Naive thymus-derived CD4-positive, alpha-beta T cell (primary cell): ENCODE measurements at regions of chr22 and their contacts with region 1.

Region 1: GRCh38 chr22:31080848-31081649 is at the start of gene SMTN:
- DNase-seq: peak; percentile 75 to 90 (median 84)
- ATAC-seq: peak; percentile 83
- H3K4me3 ChIP-seq: peak within 1 kb of the TSS; percentile 84
- H3K4me3 Mint-ChIP-seq: peak within 1 kb of the TSS; percentile 83 to 93 (median 88)
- H3K27ac ChIP-seq: peak within 1 kb of the TSS; percentile 43
- H3K27ac Mint-ChIP-seq: peak within 1 kb of the TSS in 8 of 9 donors; percentile 35 to 78 (median 68)
- H3K4me1 ChIP-seq: peaks cover 13 to 39% of the 10 kb centered on the region in 2 donors
- H3K4me1 Mint-ChIP-seq: peaks cover 26 to 43% (median 38%) of the 10 kb centered on the region in 7 donors
- H3K27me3 ChIP-seq: no peaks in the 10 kb centered on the region
- H3K27me3 Mint-ChIP-seq: no peaks in the 10 kb centered on the region
- total RNA-seq, gene SMTN: 3.1 to 14.9 (median 6.2) TPM

Region 2: DNA sequence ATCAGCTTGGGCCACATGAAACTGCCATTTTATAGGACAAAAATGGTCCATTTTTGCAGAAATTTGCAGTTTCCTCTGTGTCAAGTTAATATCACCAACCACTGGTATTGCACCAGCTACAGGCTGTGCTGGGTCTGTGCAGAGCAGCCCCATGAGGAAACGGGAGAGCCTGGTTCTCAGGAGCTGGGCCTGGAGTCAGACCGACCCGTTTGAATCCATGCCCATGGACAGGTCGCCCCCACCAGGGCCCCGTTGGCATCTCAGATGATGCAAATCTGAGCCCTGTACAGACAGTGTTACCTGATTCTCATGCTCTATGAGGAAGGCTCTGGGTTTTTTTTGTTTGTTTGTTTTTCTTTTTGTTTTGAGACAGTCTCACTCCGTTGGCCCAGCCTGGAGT is 524.7 kb before region 1 on chr22:
- CTCF ChIA-PET with region 1: no interaction called
- POLR2A ChIA-PET with region 1: no interaction called
- intact Hi-C with region 1: no loop called
- DNase-seq: no peak
- ATAC-seq: no peak
- H3K4me3 ChIP-seq: no peak overlapping the region
- H3K4me3 Mint-ChIP-seq: no peak overlapping the region
- H3K27ac ChIP-seq: no peak overlapping the region
- H3K27ac Mint-ChIP-seq: no peak overlapping the region
- H3K4me1 ChIP-seq: no peaks in the 10 kb centered on the region
- H3K4me1 Mint-ChIP-seq: peaks cover 0 to 5% (median 0%) of the 10 kb centered on the region in 7 donors
- H3K27me3 ChIP-seq: no peaks in the 10 kb centered on the region
- H3K27me3 Mint-ChIP-seq: peaks cover 0 to 3% (median 0%) of the 10 kb centered on the region in 5 donors

Region 3: GRCh38 chr22:30634471-30635233 is 446.4 kb before region 1 on chr22:
- CTCF ChIA-PET with region 1: interaction called, 7 read pairs
- POLR2A ChIA-PET with region 1: interaction called, 3 read pairs
- intact Hi-C with region 1: loop called (anchors 1 kb)
- DNase-seq: peak; percentile 79 to 91 (median 88)
- ATAC-seq: peak; percentile 76
- H3K4me3 ChIP-seq: peak overlapping the region; percentile 77
- H3K4me3 Mint-ChIP-seq: peak overlapping the region; percentile 77 to 92 (median 83)
- H3K27ac ChIP-seq: peak overlapping the region; percentile 70
- H3K27ac Mint-ChIP-seq: peak overlapping the region; percentile 75 to 93 (median 85)
- H3K4me1 ChIP-seq: peaks cover 18 to 27% of the 10 kb centered on the region in 2 donors
- H3K4me1 Mint-ChIP-seq: peaks cover 13 to 25% (median 23%) of the 10 kb centered on the region in 7 donors
- H3K27me3 ChIP-seq: no peaks in the 10 kb centered on the region
- H3K27me3 Mint-ChIP-seq: no peaks in the 10 kb centered on the region

Region 4: GRCh38 chr22:30920407-30920806 is 160.6 kb before region 1 on chr22:
- CTCF ChIA-PET with region 1: interaction called, 6 read pairs
- POLR2A ChIA-PET with region 1: interaction called, 5 read pairs
- intact Hi-C with region 1: loop called (anchors 1 kb)
- DNase-seq: peak; percentile 65 to 84 (median 78)
- ATAC-seq: peak; percentile 88
- H3K4me3 ChIP-seq: no peak overlapping the region
- H3K4me3 Mint-ChIP-seq: peak overlapping the region; percentile 62 to 89 (median 77)
- H3K27ac ChIP-seq: peak overlapping the region; percentile 43
- H3K27ac Mint-ChIP-seq: peak overlapping the region; percentile 5 to 90 (median 28)
- H3K4me1 ChIP-seq: peaks cover 6 to 16% of the 10 kb centered on the region in 2 donors
- H3K4me1 Mint-ChIP-seq: peaks cover 4 to 29% (median 21%) of the 10 kb centered on the region in 7 donors
- H3K27me3 ChIP-seq: no peaks in the 10 kb centered on the region
- H3K27me3 Mint-ChIP-seq: peaks cover 0 to 2% (median 0%) of the 10 kb centered on the region in 5 donors

Region 5: DNA sequence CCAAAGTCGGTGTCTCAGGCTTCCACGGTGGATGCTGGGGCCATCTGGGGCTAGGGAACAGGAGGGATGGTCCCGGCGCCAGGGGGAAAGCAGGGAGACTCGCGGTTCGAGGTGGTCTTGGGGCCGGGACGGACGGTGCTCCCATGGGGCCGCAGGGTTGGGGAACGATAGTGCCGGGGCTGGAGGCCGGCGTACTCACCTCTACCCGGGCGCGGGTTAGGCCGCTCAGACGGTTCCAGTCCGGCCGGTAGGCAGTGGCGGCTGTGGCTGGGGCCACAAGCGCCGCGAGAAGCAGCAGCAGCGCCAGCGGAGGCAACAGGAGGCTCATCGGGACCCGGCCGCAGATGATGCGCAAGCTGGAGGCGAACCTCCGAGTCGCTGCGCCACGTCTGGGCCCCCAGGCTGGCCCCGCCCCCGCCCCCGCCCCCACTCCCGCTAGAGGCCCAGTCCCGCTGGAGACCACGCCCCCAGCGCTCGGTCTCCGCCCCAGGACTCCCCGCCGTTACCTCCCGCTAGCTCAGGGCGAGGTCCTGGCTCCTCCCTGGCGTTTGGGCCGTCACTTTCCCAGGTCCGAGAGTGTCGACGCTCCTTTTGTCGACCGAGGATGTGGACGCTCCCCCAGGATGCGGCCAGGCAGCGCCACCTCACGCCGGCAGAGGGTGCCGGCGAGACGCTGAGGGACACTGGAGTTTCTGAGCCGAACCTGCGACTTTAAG is 26.3 kb after region 1 on chr22 and contains the start of gene SELENOM:
- CTCF ChIA-PET with region 1: interaction called, 8 read pairs
- POLR2A ChIA-PET with region 1: interaction called, 12 read pairs
- intact Hi-C with region 1: loop called (anchors 1 kb)
- DNase-seq: peak; percentile 73 to 89 (median 84)
- ATAC-seq: peak; percentile 98
- H3K4me3 ChIP-seq: peak within 1 kb of the TSS; percentile 94
- H3K4me3 Mint-ChIP-seq: peak within 1 kb of the TSS; percentile 88 to 98 (median 93)
- H3K27ac ChIP-seq: peak within 1 kb of the TSS; percentile 86
- H3K27ac Mint-ChIP-seq: peak within 1 kb of the TSS; percentile 81 to 96 (median 90)
- H3K4me1 ChIP-seq: peaks cover 8 to 16% of the 10 kb centered on the region in 2 donors
- H3K4me1 Mint-ChIP-seq: peaks cover 12 to 26% (median 20%) of the 10 kb centered on the region in 7 donors
- H3K27me3 ChIP-seq: no peaks in the 10 kb centered on the region
- H3K27me3 Mint-ChIP-seq: peaks cover 0 to 3% (median 0%) of the 10 kb centered on the region in 5 donors
- total RNA-seq, gene SELENOM: 9.1 to 71.5 (median 68.6) TPM

Region 6: DNA sequence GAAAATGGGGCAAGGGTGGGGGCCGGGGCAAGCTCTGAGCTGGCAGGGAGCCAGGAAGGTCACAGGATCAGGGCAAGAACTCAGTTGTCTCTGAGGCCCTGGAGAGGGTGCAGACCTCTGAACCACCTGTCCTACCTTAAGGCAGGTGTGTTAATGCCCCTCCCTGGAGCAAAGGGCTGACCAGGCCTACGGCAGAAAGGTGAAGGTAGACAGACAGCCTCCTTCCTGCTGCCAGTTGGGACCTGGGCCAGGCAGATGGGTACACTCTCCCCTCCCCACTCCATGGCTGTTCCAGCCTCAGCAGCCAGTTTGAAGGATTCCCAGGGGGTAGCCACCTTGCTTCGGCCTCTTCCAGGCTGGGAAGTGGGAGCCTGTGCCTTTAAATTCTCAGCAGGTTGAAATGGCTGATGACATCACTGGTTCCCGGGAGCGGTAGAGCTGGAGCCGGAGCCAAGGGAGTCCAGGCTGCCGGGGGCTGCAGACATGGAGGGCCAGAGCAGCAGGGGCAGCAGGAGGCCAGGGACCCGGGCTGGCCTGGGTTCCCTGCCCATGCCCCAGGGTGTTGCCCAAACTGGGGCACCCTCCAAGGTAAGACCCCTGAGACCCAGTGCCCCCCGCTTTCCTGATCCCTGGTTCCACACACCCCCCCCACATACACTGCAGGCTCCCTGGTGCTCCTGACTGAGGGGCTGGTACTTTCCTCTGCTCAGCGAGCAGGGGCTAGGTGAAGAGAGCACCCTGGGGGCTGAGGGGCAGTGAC is 41.7 kb after region 1 on chr22 and contains the start of gene INPP5J:
- CTCF ChIA-PET with region 1: no interaction called
- POLR2A ChIA-PET with region 1: no interaction called
- intact Hi-C with region 1: no loop called
- DNase-seq: no peak
- ATAC-seq: no peak
- H3K4me3 ChIP-seq: no peak within 1 kb of the TSS
- H3K4me3 Mint-ChIP-seq: no peak within 1 kb of the TSS
- H3K27ac ChIP-seq: no peak within 1 kb of the TSS
- H3K27ac Mint-ChIP-seq: peak within 1 kb of the TSS in 2 of 9 donors; percentile 10 to 59
- H3K4me1 ChIP-seq: no peaks in the 10 kb centered on the region
- H3K4me1 Mint-ChIP-seq: peaks cover 0 to 4% (median 0%) of the 10 kb centered on the region in 7 donors
- H3K27me3 ChIP-seq: no peaks in the 10 kb centered on the region
- H3K27me3 Mint-ChIP-seq: peaks cover 0 to under 1% (median 0%) of the 10 kb centered on the region in 5 donors
- total RNA-seq, gene INPP5J: 0.24 to 0.81 (median 0.51) TPM in 4 of 5 experiments, not detected in the other

Region 7: GRCh38 chr22:31230871-31231621 is 150.0 kb after region 1 on chr22:
- CTCF ChIA-PET with region 1: interaction called, 3 read pairs
- POLR2A ChIA-PET with region 1: no interaction called
- intact Hi-C with region 1: loop called in 1 of 2 experiments (anchors 1 kb)
- DNase-seq: peak in 8 of 9 donors; percentile 28 to 77 (median 64)
- ATAC-seq: peak; percentile 84
- H3K4me3 ChIP-seq: no peak overlapping the region
- H3K4me3 Mint-ChIP-seq: peak overlapping the region; percentile 13 to 78 (median 59)
- H3K27ac ChIP-seq: no peak overlapping the region
- H3K27ac Mint-ChIP-seq: peak overlapping the region; percentile 80 to 95 (median 91)
- H3K4me1 ChIP-seq: peaks cover 7 to 21% of the 10 kb centered on the region in 2 donors
- H3K4me1 Mint-ChIP-seq: peaks cover 49 to 57% (median 55%) of the 10 kb centered on the region in 7 donors
- H3K27me3 ChIP-seq: no peaks in the 10 kb centered on the region
- H3K27me3 Mint-ChIP-seq: no peaks in the 10 kb centered on the region

Region 8: DNA sequence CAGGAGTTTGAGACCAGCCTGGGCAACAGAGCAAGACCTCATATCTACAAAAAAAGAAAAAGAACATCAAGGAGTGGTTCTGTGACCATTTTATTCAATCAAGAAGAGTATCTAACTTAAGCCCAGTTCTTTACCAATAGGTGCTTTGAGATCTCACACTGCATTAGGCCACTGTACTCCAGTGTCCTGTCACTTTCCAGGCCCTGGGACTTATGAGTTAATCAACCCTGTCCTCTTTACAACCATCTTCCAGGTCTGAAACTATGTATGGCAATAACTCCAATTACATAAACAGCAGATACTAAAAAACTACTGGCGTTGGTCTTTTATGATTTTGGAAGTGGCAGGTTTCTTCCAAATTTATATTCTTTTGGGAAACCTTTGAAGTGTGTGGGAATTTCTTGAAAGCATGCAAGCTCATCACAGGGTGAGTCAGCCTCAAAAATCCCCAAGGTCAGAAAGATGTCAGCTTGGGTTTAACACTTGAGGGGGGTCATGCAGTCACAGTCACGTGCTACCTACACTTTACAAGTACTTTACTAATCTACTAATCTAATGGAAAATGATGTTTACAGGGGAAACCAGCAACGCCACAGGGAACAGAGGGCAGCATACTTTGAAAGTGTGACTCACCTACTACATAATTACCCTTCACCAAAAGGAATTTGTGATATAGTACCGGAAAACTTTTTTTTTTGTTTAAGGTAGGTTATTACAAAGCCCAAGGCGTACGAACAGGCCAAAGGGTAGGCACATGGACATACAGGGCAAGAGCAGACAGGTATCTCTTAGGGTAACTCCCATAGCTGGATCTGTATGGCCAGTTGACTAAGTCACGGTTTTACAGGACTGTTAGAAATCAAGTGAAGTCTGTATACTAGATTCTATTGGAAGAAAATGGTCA is 565.4 kb after region 1 on chr22:
- CTCF ChIA-PET with region 1: no interaction called
- POLR2A ChIA-PET with region 1: no interaction called
- intact Hi-C with region 1: no loop called
- DNase-seq: no peak
- ATAC-seq: no peak
- H3K4me3 ChIP-seq: no peak overlapping the region
- H3K4me3 Mint-ChIP-seq: no peak overlapping the region
- H3K27ac ChIP-seq: no peak overlapping the region
- H3K27ac Mint-ChIP-seq: peak overlapping the region in 4 of 9 donors; percentile 11 to 49 (median 32)
- H3K4me1 ChIP-seq: no peaks in the 10 kb centered on the region
- H3K4me1 Mint-ChIP-seq: peaks cover 0 to 21% (median 4%) of the 10 kb centered on the region in 7 donors
- H3K27me3 ChIP-seq: no peaks in the 10 kb centered on the region
- H3K27me3 Mint-ChIP-seq: no peaks in the 10 kb centered on the region

Region 9: DNA sequence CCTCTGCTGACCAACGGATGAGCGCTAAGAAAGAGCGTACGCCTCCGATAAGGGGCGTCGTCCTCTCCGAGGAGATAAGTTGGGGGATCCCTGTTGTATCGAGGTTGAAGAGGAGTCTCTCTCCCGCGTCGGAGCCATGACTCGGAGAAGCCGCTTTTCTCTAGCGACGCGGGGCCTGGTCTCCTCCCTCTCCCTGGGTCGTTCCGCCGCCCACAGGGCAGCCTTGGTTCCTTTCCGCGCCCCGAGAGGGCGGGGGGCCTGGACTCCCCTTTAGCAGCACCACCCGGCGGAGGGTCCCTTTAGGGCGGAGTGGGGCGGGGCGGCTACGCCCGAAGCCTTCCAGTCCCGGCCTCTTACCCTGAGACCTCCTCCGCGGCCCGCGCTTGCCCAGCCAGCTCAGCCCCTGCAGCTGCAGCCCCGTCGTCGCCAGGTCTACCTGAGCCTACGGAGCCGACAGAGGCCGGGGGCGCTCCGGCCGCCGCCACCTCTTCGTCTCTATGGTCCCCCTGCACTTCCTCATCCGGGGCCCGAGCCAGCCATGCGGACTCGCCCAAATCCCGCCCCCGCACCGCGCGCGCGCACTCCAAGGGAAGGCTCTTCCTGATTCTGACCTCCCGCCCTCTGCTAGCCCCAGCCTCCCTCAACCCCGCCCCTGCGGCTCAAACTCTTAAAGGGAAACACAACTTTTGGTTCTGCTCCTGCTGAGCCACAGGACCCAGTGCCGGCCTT is 668.8 kb after region 1 on chr22 and contains the start of gene PRR14L:
- CTCF ChIA-PET with region 1: no interaction called
- POLR2A ChIA-PET with region 1: no interaction called
- intact Hi-C with region 1: loop called in 1 of 2 experiments (anchors 10 kb)
- DNase-seq: peak; percentile 94 to 100 (median 98)
- ATAC-seq: peak; percentile 86
- H3K4me3 ChIP-seq: peak within 1 kb of the TSS; percentile 92
- H3K4me3 Mint-ChIP-seq: peak within 1 kb of the TSS; percentile 87 to 97 (median 94)
- H3K27ac ChIP-seq: peak within 1 kb of the TSS; percentile 83
- H3K27ac Mint-ChIP-seq: peak within 1 kb of the TSS; percentile 82 to 98 (median 96)
- H3K4me1 ChIP-seq: peaks cover 31 to 37% of the 10 kb centered on the region in 2 donors
- H3K4me1 Mint-ChIP-seq: peaks cover 36 to 65% (median 59%) of the 10 kb centered on the region in 7 donors
- H3K27me3 ChIP-seq: no peaks in the 10 kb centered on the region
- H3K27me3 Mint-ChIP-seq: peaks cover 0 to 2% (median 0%) of the 10 kb centered on the region in 5 donors
- total RNA-seq, gene PRR14L: 43.1 to 82.6 (median 66.9) TPM